Lower leg skin (tissue), 4 donors: ENCODE measurements at regions of chr2 and their contacts with region 1.

Region 1: GRCh38 chr2:182758379-182758778 is 42.3 kb downstream of the DNAJC10 start:
- DNase-seq: no peak
- H3K4me3 ChIP-seq: no peak overlapping the region
- CTCF ChIP-seq: no peak
- POLR2A ChIP-seq: no peak

Region 2: DNA sequence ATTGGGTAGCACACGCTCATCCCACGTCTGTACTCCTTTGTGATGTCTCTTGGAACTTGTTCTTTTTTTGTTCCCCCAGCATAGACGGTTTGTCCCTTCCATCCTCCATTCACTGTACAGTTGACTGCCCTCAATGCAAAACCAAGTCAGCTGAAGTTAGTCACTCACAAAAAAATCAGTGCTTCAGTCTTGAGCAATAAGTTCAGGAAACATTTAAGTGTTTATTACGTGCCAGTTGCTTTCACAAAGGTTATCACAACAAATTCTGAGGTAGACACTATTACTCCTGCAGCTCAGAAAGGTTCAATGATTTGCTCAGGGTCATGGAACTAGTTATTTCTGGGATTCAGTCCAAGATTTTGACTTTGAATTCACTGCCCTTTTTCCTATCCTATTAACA is 433.7 kb before region 1 on chr2:
- intact Hi-C with region 1: loop called (anchors 5 kb)
- DNase-seq: no peak
- H3K4me3 ChIP-seq: no peak overlapping the region
- CTCF ChIP-seq: no peak
- POLR2A ChIP-seq: no peak